ENCODE measurements at regions of chr6 and their contacts with region 1.

Region 1: DNA sequence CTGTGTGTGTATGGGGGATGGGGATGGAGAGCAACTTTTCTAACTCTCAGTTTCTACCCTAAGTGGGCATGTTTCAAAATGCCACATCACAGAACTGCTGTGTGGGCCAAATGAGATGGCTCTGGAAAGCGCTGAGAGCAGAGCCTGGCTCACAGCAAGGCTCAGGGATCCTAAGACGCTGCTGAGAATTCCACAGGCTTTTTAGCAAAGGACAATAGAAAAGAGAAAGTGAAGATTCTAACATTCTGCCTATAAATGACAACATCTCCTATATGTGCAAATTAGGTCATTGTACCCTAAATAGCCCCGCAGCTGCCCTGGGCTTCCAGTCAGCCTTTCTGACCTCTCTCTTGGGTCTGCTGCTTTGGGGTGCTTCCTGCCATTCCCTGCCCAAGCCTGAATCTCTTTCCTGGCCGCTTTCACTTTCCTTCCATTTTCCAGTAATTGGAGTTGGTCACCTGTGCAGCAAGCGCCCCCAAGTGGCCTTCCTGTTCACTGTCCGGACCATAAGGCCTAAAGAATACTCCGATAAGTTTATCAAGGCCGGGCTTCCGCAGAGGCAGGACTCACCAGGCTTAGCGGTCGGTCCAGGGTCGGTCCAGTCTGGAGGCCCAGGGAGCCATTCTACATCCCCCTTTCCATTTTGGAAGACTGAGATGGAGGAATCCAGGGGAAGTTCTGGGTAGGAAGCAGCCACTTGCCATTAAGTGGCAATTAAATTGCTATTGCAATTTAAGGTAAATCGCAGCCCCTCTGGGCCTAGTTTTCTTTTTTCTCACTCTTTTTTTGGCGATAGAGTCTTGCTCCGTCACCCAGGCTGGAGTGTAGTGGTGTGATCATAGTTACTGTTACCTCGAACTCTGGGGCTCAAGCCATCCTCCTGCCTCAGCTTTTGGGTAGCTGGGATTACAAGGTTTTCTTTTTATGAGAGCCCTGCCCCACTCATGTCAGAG is 6.6 kb upstream of the DDR1 start:
- DNase-seq: peak; percentile 72 to 84 (median 82)
- H3K4me3 ChIP-seq: peak overlapping the region; percentile 15 to 73 (median 38)
- H3K4me3 Mint-ChIP-seq: peak overlapping the region; percentile 84 to 94
- H3K27ac ChIP-seq: peak overlapping the region in 1 of 2 donors; percentile 46
- H3K27ac Mint-ChIP-seq: peak overlapping the region in 6 of 7 donors; percentile 39 to 86 (median 70)
- H3K4me1 ChIP-seq: peaks cover 9 to 10% of the 10 kb centered on the region in 2 donors
- H3K4me1 Mint-ChIP-seq: peaks cover 8% of the 10 kb centered on the region
- H3K27me3 ChIP-seq: peaks cover 0 to 18% of the 10 kb centered on the region in 2 donors
- H3K27me3 Mint-ChIP-seq: peaks cover 12 to 20% (median 14%) of the 10 kb centered on the region in 3 donors
- CTCF ChIP-seq: peak; percentile 89

Region 2: DNA sequence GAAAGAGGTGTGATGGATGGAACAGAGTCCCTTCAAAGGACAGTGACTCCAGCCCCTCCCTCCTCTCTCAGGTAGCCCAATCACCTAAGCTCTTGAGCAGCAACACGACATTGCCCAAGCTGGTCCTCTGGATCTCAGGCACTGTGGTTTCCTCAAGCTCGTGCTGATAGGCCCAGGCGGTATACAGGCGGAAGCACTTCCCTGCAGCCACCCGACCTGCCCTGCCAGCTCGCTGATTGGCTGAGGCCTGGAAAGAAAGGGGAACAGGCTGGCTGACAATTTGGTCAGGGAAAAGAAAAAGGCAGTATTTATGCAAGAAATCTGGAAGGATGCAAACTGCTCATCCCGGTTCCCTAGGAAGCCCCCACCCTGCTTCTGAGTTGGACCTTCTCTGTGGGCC is 221.2 kb before region 1 on chr6:
- intact Hi-C with region 1: no loop called
- DNase-seq: peak; percentile 58 to 81 (median 68)
- H3K4me3 ChIP-seq: no peak overlapping the region
- H3K4me3 Mint-ChIP-seq: no peak overlapping the region
- H3K27ac ChIP-seq: peak overlapping the region; percentile 15 to 58
- H3K27ac Mint-ChIP-seq: peak overlapping the region; percentile 13 to 87 (median 71)
- H3K4me1 ChIP-seq: peaks cover 13 to 16% of the 10 kb centered on the region in 2 donors
- H3K4me1 Mint-ChIP-seq: peaks cover 15% of the 10 kb centered on the region
- H3K27me3 ChIP-seq: no peaks in the 10 kb centered on the region
- H3K27me3 Mint-ChIP-seq: peaks cover 0 to 1% (median 0%) of the 10 kb centered on the region in 3 donors
- CTCF ChIP-seq: no peak

Region 3: GRCh38 chr6:30678964-30679726 is 198.6 kb before region 1 on chr6:
- intact Hi-C with region 1: loop called in 1 of 2 experiments (anchors 5 kb)
- DNase-seq: peak; percentile 81 to 88 (median 82)
- H3K4me3 ChIP-seq: peak overlapping the region in 2 of 3 experiments; percentile 16 to 100
- H3K4me3 Mint-ChIP-seq: peak overlapping the region; percentile 77 to 87
- H3K27ac ChIP-seq: peak overlapping the region; percentile 36 to 70
- H3K27ac Mint-ChIP-seq: peak overlapping the region; percentile 60 to 99 (median 80)
- H3K4me1 ChIP-seq: peaks cover 41 to 51% of the 10 kb centered on the region in 2 donors
- H3K4me1 Mint-ChIP-seq: peaks cover 47% of the 10 kb centered on the region
- H3K27me3 ChIP-seq: no peaks in the 10 kb centered on the region
- H3K27me3 Mint-ChIP-seq: peaks cover 0 to 3% (median 0%) of the 10 kb centered on the region in 3 donors
- CTCF ChIP-seq: peak; percentile 91

Region 4: DNA sequence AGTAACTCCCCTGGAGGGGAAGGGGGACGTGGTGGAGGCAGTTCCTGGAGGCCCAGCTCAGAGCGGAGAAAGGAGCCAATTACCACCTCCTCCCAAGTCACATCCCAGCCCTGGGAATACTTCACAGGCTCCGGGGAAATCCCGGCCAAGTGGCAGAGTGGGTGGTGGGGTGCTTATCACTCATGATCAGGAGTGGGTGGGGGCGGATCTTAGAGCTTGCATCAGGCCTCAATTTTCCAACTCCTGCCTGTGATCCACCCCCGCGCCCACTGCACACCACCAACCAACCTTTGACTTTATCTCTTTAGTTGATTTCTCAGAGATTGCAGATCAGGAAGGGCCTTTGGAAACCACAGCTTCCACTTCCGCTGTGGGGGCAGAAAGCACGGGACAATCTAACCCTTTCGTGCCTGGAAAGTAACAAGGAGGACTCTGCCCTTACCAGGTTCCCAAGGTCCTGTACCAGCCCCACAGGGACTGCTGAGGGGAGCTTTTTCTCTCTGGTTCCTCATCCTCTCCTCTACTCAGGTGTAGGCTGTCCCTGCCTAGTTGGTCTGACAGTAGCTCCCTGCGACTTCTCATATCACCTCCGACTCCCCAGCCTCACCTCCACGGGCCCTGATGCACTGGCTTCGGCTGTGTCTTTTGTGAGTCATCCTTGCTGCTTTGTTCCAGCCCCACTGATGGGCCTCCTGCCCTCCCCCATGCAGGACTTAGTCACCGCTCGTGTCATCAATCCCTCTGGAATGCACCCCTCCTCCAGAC is 108.4 kb before region 1 on chr6:
- intact Hi-C with region 1: loop called in 1 of 2 experiments (anchors 10 kb)
- DNase-seq: peak; percentile 74 to 94 (median 85)
- H3K4me3 ChIP-seq: peak overlapping the region in 1 of 3 experiments; percentile 61
- H3K4me3 Mint-ChIP-seq: peak overlapping the region; percentile 74 to 86
- H3K27ac ChIP-seq: peak overlapping the region in 1 of 2 donors; percentile 72
- H3K27ac Mint-ChIP-seq: peak overlapping the region; percentile 77 to 93 (median 84)
- H3K4me1 ChIP-seq: peaks cover 31 to 38% of the 10 kb centered on the region in 2 donors
- H3K4me1 Mint-ChIP-seq: peaks cover 56% of the 10 kb centered on the region
- H3K27me3 ChIP-seq: no peaks in the 10 kb centered on the region
- H3K27me3 Mint-ChIP-seq: peaks cover 2 to 14% (median 8%) of the 10 kb centered on the region in 3 donors
- CTCF ChIP-seq: no peak

Region 5: GRCh38 chr6:30828027-30828960 is 49.4 kb before region 1 on chr6:
- intact Hi-C with region 1: loop called (anchors 2 to 5 kb)
- DNase-seq: peak; percentile 64 to 77 (median 77)
- H3K4me3 ChIP-seq: peak overlapping the region in 2 of 3 experiments; percentile 8 to 62
- H3K4me3 Mint-ChIP-seq: peak overlapping the region; percentile 68 to 77
- H3K27ac ChIP-seq: peak overlapping the region; percentile 5 to 46
- H3K27ac Mint-ChIP-seq: peak overlapping the region; percentile 31 to 90 (median 68)
- H3K4me1 ChIP-seq: peaks cover 59 to 68% of the 10 kb centered on the region in 2 donors
- H3K4me1 Mint-ChIP-seq: peaks cover 68% of the 10 kb centered on the region
- H3K27me3 ChIP-seq: no peaks in the 10 kb centered on the region
- H3K27me3 Mint-ChIP-seq: peaks cover 1 to 2% (median 2%) of the 10 kb centered on the region in 3 donors
- CTCF ChIP-seq: peak; percentile 86